ENCODE measurements at regions of chr4 and their contacts with region 1.

Region 1: GRCh38 chr4:112145326-112145819 is at the start of gene FAM241A:
- DNase-seq: peak; percentile 94
- ATAC-seq: peak; percentile 94
- H3K4me3 Mint-ChIP-seq: peak within 1 kb of the TSS; percentile 90
- H3K27ac Mint-ChIP-seq: peak within 1 kb of the TSS; percentile 90
- H3K4me1 Mint-ChIP-seq: peaks cover 39% of the 10 kb centered on the region
- H3K27me3 Mint-ChIP-seq: no peaks in the 10 kb centered on the region
- total RNA-seq, gene FAM241A: 3.2 to 3.5 TPM

Region 2: GRCh38 chr4:111879539-111879938 is 265.8 kb before region 1 on chr4:
- CTCF ChIA-PET with region 1: no interaction called
- POLR2A ChIA-PET with region 1: no interaction called
- intact Hi-C with region 1: no loop called
- DNase-seq: no peak
- ATAC-seq: no peak
- H3K4me3 Mint-ChIP-seq: no peak overlapping the region
- H3K27ac Mint-ChIP-seq: no peak overlapping the region
- H3K4me1 Mint-ChIP-seq: no peaks in the 10 kb centered on the region
- H3K27me3 Mint-ChIP-seq: no peaks in the 10 kb centered on the region

Region 3: DNA sequence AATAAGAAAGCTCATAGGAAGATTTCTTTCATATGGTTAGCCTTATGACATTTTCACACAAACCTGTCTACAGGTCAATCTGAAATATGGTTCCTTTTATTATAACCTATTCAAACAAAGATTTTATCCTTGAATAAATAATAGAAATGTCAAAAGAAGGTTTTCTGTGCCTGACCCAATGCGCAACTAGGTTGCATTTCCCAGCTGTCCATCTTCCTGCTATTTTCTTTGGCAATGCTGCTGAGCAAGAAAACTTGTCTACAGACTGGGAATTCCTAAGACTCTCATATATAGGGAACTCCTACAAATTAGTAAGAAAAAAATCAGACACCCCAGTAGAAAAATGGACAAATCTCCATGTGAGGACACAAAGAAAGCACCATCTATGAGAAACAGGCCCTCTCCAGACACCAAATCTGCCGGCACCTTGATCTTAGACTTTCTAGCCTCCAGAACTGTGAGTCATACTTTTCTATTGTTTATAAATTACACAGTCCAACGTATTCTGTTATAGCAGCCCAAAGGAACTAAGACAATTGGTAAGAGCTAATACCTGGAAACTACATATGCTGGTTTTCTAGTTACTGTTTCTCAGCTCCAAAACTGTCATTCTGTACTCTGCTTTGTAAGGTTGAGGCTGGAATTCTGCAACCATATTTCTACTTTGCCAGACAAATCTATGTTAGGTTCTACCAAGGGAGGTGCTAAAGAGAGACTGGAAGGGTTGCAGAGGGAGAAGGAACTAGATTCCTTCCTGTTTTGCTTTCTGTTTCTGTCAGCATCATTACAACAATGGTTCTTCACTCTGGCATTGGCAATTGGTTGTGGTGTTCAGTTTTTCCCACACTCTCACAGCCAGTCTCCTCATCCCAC is 36.0 kb before region 1 on chr4:
- CTCF ChIA-PET with region 1: no interaction called
- POLR2A ChIA-PET with region 1: no interaction called
- intact Hi-C with region 1: loop called (anchors 5 kb)
- DNase-seq: no peak
- ATAC-seq: peak; percentile 49
- H3K4me3 Mint-ChIP-seq: no peak overlapping the region
- H3K27ac Mint-ChIP-seq: no peak overlapping the region
- H3K4me1 Mint-ChIP-seq: peaks cover 9% of the 10 kb centered on the region
- H3K27me3 Mint-ChIP-seq: no peaks in the 10 kb centered on the region

Region 4: GRCh38 chr4:112170451-112170993 is 25.1 kb after region 1 on chr4:
- CTCF ChIA-PET with region 1: no interaction called
- POLR2A ChIA-PET with region 1: no interaction called
- intact Hi-C with region 1: loop called in 1 of 2 experiments (anchors 2 kb)
- DNase-seq: no peak
- ATAC-seq: peak; percentile 71
- H3K4me3 Mint-ChIP-seq: no peak overlapping the region
- H3K27ac Mint-ChIP-seq: no peak overlapping the region
- H3K4me1 Mint-ChIP-seq: peaks cover 37% of the 10 kb centered on the region
- H3K27me3 Mint-ChIP-seq: no peaks in the 10 kb centered on the region

Region 5: DNA sequence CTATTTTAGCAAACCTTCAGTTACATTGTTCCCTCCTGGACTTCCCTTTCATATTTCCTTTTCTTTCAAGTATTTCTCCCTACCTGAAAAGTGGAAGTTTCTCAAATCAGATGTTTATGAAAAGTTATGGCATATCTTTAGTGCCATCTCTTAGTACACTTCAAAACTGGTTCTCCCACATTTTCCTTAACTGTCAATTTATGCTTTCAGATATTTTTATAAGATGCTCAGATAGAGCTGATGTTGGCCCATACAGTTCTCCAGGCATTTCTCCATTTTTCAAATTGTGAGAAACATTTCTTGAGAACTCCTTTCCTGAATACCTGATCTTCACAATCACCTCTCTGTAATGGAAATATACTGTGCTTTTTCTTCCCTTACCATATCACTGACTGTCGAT is 53.7 kb after region 1 on chr4:
- CTCF ChIA-PET with region 1: no interaction called
- POLR2A ChIA-PET with region 1: no interaction called
- intact Hi-C with region 1: loop called (anchors 1 to 2 kb)
- DNase-seq: no peak
- ATAC-seq: peak; percentile 10
- H3K4me3 Mint-ChIP-seq: no peak overlapping the region
- H3K27ac Mint-ChIP-seq: peak overlapping the region; percentile 42
- H3K4me1 Mint-ChIP-seq: peaks cover 20% of the 10 kb centered on the region
- H3K27me3 Mint-ChIP-seq: peaks cover 4% of the 10 kb centered on the region

Region 6: DNA sequence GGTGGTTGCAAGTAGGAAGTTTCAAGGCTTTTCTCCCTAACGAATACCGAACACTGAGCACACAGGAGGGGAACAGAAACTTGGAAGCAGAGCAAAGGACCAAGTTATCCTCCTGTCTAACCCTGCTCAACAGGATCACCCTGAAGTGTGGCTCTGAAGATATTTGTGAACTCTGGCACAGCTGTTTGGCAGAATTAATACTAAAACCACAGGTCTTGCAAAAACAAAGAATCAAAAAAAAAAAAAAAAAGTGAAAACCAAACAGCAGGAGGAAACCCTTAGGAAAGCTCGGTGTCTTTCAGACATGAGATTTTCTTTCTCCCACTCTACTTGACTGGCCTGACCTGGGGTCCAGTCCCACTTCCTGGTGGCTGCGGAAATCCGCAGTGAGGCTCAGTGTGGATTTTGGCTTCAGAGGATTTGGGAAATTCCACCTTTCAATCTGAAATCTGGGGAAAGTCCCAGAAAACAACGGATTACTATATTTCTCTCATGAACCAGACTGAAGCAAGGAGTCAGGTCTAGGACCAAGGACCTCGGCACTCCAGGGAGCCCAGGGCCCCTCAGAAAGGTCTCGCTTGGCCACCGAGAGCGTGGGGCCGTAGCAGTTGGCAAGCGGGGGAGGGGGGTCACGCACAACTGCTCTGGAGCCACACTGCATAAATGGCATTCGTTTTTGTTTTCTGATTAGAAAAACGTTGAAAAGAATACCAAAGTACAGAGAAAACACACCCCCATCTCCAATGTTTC is 139.5 kb after region 1 on chr4:
- CTCF ChIA-PET with region 1: no interaction called
- POLR2A ChIA-PET with region 1: no interaction called
- intact Hi-C with region 1: loop called (anchors 1 to 5 kb)
- DNase-seq: peak; percentile 43
- ATAC-seq: no peak
- H3K4me3 Mint-ChIP-seq: peak overlapping the region; percentile 96
- H3K27ac Mint-ChIP-seq: peak overlapping the region; percentile 96
- H3K4me1 Mint-ChIP-seq: peaks cover 73% of the 10 kb centered on the region
- H3K27me3 Mint-ChIP-seq: no peaks in the 10 kb centered on the region